HEK293 (cell line): ENCODE measurements at regions of chr11 and their contacts with region 1.

Region 1: DNA sequence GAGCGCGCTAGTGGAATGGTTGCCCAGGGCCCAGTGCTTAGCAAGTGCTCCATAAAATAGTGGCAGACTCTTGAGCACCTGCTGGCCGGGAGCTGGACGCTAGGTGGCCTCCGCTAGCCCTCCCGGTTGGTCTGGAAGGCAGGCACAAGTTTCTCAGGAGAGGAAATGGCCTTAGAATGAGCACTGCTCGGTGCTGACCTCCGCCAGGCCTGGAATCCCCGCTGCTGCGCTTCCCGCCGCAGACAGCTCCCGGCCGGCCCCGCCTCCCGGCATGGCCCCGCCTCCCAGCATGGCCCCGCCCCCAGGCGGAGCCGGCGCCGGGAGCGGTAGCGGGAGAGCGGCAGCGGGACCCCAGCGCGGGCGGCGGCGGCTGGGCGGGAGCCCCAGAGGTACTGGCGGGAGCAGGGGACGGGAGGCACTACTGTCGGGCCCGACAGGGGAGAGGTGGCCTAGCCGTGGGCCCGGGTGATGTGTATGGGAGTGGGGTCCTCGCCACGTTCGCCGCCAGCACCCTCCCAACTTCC is at the start of gene SIPA1:
- H3K4me3 ChIP-seq: peak within 1 kb of the TSS; percentile 69
- H3K27ac ChIP-seq: peak within 1 kb of the TSS; percentile 61; the same call in 1 of the 2 replicates
- H3K4me1 ChIP-seq: no peaks in the 10 kb centered on the region
- CTCF ChIP-seq: peak; percentile 9; the same call in 1 of the 2 replicates

Region 2: GRCh38 chr11:65652511-65653231 is 14.8 kb after region 1 on chr11:
- CTCF ChIA-PET with region 1: interaction called, 5 read pairs
- POLR2A ChIA-PET with region 1: interaction called, 50 read pairs
- H3K4me3 ChIP-seq: peak overlapping the region; percentile 46
- H3K27ac ChIP-seq: peak overlapping the region; percentile 54
- H3K4me1 ChIP-seq: peaks cover 8% of the 10 kb centered on the region
- CTCF ChIP-seq: no peak

Region 3: GRCh38 chr11:65662799-65663638 is 25.2 kb after region 1 on chr11 and contains the start of gene RELA:
- CTCF ChIA-PET with region 1: no interaction called
- POLR2A ChIA-PET with region 1: interaction called, 22 read pairs
- H3K4me3 ChIP-seq: peak within 1 kb of the TSS; percentile 82
- H3K27ac ChIP-seq: peak within 1 kb of the TSS; percentile 93
- H3K4me1 ChIP-seq: no peaks in the 10 kb centered on the region
- CTCF ChIP-seq: no peak

Region 4: DNA sequence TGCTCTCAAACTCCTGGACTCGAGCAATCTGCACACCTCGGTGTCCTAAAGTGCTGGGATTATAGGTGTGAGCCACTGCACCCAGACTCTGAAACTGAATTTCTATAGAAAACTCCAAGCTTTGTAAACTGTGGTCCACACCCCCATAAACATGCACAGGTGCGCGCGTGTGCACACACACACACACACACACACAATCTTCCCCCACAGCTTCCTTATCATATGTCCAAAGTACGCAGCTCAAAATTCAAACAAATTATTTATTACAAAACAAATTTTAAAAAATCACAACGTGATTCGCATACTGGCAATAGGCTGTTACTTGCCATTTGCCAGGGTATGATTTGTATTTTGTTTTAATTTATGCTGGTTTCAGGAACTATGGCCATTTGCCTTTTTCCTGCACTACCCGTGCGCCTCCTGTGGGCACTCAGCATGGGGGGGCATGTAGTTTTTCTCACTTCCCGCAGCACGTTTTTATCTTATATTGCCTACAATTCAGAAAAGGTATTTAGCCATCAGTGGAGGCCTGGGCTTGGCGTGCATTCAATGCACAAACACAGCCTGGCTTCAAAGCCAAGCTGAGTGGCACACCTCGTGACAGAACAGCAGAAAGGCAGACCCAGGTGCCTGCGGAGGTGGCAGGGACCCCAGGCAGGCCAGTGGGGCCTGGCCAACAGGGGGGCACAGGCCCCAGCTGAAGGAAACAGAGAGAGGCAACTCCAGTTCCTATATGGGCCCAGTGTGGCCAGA is 185.1 kb after region 1 on chr11:
- CTCF ChIA-PET with region 1: no interaction called
- POLR2A ChIA-PET with region 1: no interaction called
- H3K4me3 ChIP-seq: no peak overlapping the region
- H3K27ac ChIP-seq: no peak overlapping the region
- H3K4me1 ChIP-seq: no peaks in the 10 kb centered on the region
- CTCF ChIP-seq: no peak

Region 5: DNA sequence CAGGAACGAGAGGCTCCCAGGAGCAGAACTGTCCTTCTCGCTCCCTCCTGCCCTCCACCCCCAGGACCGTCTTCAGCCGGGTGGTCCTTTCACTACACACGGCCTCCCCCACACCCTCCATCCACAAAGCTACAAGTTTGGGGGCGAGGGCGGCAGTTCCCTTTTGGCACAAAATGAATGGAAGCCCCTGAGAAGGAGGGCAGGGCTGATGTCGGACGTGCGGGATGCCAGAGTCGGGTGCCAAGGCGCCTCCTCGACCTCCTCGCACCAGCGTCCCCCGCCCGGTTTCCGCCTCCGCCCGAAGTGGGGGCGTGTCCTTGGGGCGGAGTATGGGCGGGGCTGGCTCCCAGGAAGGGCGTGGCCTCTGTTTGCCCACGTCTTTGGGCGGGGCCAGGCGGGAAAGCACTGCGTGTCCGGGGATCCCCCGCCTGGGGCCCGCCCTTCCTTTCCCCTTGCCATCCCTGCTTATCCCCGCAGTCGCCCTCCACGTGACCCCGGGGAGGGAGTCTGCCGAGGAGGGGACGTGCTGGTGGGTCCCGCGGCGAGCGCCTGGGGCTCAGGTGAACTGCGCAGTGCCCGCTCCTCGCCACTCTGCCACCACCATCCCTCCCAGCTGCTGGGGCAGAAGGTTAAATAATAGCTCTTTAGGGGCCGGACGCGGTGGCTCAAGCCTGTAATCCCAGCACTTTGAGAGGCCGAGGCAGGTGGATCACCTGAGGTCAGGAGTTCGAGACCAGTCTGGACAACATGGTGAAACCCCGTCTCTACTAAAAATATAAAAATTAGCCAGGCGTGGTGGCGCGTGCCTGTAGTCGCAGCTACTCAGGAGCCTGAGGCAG is 235.7 kb after region 1 on chr11:
- CTCF ChIA-PET with region 1: no interaction called
- POLR2A ChIA-PET with region 1: no interaction called
- H3K4me3 ChIP-seq: peak overlapping the region; percentile 44
- H3K27ac ChIP-seq: no peak overlapping the region
- H3K4me1 ChIP-seq: no peaks in the 10 kb centered on the region
- CTCF ChIP-seq: no peak